Endothelial cell of umbilical vein (primary cell): ENCODE measurements at regions of chr4 and their contacts with region 1.

Region 1: DNA sequence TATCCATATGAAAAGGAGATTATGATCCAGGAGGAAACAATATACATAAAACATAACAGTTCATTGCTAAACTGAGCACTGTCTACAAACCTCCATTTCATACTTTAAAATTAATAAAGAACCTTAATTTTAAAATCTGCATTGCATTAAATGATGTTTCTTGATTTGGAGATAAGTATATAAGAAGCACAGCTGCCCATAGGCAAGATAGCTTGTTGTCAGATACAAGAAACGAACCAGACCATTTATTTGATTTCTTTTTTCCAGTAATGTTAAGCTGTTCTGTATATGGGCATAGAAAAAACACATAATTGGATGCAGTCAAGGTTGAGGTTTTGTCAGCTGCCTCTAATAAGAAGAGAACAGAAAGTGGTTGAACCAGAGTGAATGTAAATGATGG is 6.4 kb downstream of the GUF1 start:
- DNase-seq: no peak
- H3K4me3 ChIP-seq: no peak overlapping the region
- H3K27ac ChIP-seq: no peak overlapping the region
- H3K4me1 ChIP-seq: peaks cover 7% of the 10 kb centered on the region
- H3K27me3 ChIP-seq: no peaks in the 10 kb centered on the region
- CTCF ChIP-seq: no peak
- POLR2A ChIP-seq: no peak

Region 2: DNA sequence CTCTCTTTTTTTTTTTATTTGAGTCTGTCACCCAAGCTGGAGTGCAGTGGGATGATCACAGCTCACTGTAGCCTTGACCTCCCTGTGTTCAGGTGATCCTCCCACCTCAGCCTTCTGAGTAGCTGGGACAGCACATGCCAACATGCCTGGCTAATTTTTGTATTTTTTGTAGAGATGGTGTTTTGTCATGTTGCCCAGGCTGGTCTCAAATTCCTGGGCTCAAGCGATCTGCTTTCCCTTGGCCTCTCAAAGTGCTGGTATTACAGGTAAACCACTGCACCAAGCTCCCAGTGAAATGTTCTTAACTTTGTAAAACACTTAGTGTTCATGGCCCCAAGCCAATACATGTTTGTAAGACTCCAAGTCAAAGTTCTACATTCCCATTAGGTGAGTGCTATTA is 552.1 kb before region 1 on chr4:
- CTCF ChIA-PET with region 1: no interaction called
- POLR2A ChIA-PET with region 1: no interaction called
- dilution Hi-C with region 1: no loop called
- intact Hi-C with region 1: no loop called
- DNase-seq: no peak
- H3K4me3 ChIP-seq: no peak overlapping the region
- H3K27ac ChIP-seq: no peak overlapping the region
- H3K4me1 ChIP-seq: no peaks in the 10 kb centered on the region
- H3K27me3 ChIP-seq: no peaks in the 10 kb centered on the region
- CTCF ChIP-seq: no peak
- POLR2A ChIP-seq: no peak

Region 3: GRCh38 chr4:44670506-44671199 is 14.0 kb before region 1 on chr4:
- CTCF ChIA-PET with region 1: no interaction called
- POLR2A ChIA-PET with region 1: no interaction called
- dilution Hi-C with region 1: no loop called
- intact Hi-C with region 1: no loop called
- DNase-seq: no peak
- H3K4me3 ChIP-seq: no peak overlapping the region
- H3K27ac ChIP-seq: no peak overlapping the region
- H3K4me1 ChIP-seq: no peaks in the 10 kb centered on the region
- H3K27me3 ChIP-seq: peaks cover 2 to 3% of the 10 kb centered on the region in 2 experiments
- CTCF ChIP-seq: no peak
- POLR2A ChIP-seq: no peak

Region 4: GRCh38 chr4:44700427-44700826 is 15.8 kb after region 1 on chr4:
- CTCF ChIA-PET with region 1: interaction called, 13 read pairs
- POLR2A ChIA-PET with region 1: no interaction called
- dilution Hi-C with region 1: no loop called
- intact Hi-C with region 1: no loop called
- DNase-seq: no peak
- H3K4me3 ChIP-seq: no peak overlapping the region
- H3K27ac ChIP-seq: no peak overlapping the region
- H3K4me1 ChIP-seq: no peaks in the 10 kb centered on the region
- H3K27me3 ChIP-seq: no peaks in the 10 kb centered on the region
- CTCF ChIP-seq: no peak
- POLR2A ChIP-seq: no peak